Activated CD8-positive, alpha-beta T cell treated with anti-CD3 and anti-CD28 coated beads, Interleukin-2, amount 10 ng/mL, durations not matched to agents 7 days and 5 days (primary cell): ENCODE measurements at regions of chr3 and their contacts with region 1.

Region 1: DNA sequence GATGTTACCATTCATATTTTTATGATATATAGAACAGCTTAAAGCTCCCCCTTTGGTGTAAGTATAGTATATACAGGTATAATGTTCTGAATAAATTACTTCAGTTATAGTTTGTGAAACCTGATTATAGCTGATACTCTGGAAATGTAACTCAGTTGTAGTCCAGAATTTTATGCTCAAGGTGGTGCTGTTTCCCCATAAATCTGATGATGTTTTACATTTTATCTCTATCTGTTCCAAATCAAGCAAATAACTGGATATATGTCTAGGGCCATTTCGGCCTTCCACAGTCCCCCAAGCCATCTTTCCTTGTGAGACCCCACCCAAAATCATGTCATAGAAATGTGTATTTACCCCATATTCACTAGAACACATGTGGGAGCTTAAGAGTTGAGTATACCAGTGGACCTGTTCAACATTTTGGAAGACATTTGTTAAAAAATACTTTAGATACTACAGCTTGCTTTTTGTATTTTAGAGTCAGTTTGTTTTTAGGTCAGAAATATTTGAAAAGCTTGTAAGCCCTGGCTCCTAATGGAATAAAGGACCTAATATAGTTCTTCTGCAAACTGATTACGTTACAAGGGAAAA is 107.1 kb downstream of the ATG7 start:
- DNase-seq: peak; percentile 30
- ATAC-seq: no peak
- H3K4me3 Mint-ChIP-seq: no peak overlapping the region
- H3K27ac Mint-ChIP-seq: no peak overlapping the region
- H3K4me1 Mint-ChIP-seq: no peaks in the 10 kb centered on the region
- H3K27me3 Mint-ChIP-seq: no peaks in the 10 kb centered on the region

Region 2: DNA sequence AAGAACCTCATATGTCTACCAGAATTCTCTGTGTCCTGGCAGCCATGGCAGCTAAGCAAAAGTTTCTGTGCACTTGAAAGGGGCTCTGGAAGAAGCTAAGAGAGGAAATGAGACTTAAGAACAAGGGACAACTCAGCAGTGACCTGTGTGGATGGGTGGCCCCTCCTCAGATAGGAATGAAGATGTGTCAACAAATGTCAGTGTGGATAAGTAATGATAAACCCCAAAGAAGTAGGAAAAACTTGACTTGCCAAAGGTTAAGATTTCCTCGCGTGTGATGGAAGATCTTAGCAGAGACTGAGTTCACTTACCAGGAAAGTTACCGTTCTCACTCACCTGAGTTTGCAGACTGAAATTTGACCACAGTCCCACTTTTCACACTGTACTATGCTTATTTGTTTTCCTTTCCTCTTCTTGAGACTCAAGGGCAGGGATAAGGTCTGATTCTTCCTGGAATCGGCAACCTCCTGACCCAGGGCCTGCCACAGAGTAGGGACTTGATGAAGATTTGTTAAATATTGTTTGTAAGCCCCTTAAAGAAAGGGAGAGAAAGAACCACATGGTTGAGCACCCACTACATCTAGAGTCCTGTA is 232.5 kb before region 1 on chr3:
- CTCF ChIA-PET with region 1: no interaction called
- POLR2A ChIA-PET with region 1: no interaction called
- DNase-seq: no peak
- ATAC-seq: no peak
- H3K4me3 Mint-ChIP-seq: no peak overlapping the region
- H3K27ac Mint-ChIP-seq: no peak overlapping the region
- H3K4me1 Mint-ChIP-seq: peaks cover under 1% of the 10 kb centered on the region
- H3K27me3 Mint-ChIP-seq: peaks cover 45% of the 10 kb centered on the region

Region 3: DNA sequence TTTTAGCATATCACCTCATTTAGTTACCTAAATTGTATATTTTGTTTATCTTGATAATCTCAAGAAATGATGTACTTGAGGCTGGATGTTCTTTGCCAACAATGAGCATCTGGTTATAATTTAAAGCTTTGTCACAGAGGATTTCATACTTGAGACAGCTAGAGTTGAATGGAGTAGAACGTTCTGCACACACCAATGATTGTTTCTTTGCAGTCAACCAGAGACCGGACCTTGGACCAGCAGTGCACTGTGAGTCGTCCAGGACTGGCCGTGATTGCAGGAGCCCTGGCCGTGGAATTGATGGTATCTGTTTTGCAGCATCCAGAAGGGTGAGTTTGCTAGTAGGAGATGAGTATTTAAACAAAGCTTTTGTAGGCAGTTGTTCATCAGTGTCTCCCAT is 16.7 kb before region 1 on chr3:
- CTCF ChIA-PET with region 1: interaction called, 12 read pairs
- POLR2A ChIA-PET with region 1: no interaction called
- DNase-seq: no peak
- ATAC-seq: no peak
- H3K4me3 Mint-ChIP-seq: no peak overlapping the region
- H3K27ac Mint-ChIP-seq: no peak overlapping the region
- H3K4me1 Mint-ChIP-seq: no peaks in the 10 kb centered on the region
- H3K27me3 Mint-ChIP-seq: no peaks in the 10 kb centered on the region

Region 4: DNA sequence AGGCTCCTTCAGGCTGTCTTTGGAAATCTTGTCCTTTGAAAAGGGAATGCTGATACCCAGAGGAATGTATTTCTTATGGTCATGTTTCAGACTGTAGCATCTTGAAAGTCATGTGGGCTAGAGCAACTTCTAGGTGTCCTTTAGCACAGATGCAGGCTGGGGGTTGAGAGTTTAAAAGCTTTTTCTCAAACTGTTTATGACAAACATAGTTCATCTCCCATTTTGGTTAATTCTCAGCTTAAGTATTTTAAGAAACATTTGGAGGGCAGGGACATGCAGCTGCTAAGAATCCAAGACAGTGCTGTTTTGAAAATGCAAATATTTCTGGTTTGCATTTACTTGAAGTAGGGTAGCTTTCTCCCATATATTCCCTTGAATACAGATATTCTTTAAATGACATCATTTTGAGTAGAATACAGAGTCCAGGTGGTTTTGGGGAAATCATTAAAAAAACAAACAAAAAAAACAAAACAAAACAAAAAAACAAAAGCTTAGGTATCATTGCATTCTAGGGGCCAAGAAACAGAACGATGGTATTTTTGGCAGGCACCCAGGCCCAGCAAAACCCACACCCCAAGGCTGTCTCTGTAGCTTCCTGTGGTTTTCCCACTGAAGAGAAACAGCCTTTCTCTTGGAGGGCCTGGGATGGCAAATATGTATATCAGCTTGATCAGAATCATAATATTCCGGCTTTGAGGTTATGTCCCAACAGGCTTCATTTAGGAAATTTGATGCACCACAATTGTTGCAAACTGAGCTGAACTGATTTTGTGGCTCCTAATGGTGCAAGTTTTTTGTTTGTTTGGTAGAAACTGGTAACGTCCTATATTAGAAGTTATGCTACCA is 12.9 kb after region 1 on chr3:
- CTCF ChIA-PET with region 1: interaction called, 13 read pairs
- POLR2A ChIA-PET with region 1: no interaction called
- DNase-seq: no peak
- ATAC-seq: no peak
- H3K4me3 Mint-ChIP-seq: no peak overlapping the region
- H3K27ac Mint-ChIP-seq: no peak overlapping the region
- H3K4me1 Mint-ChIP-seq: peaks cover 13% of the 10 kb centered on the region
- H3K27me3 Mint-ChIP-seq: no peaks in the 10 kb centered on the region

Region 5: GRCh38 chr3:11452312-11452711 is 73.0 kb after region 1 on chr3:
- CTCF ChIA-PET with region 1: no interaction called
- POLR2A ChIA-PET with region 1: no interaction called
- DNase-seq: no peak
- ATAC-seq: no peak
- H3K4me3 Mint-ChIP-seq: no peak overlapping the region
- H3K27ac Mint-ChIP-seq: no peak overlapping the region
- H3K4me1 Mint-ChIP-seq: no peaks in the 10 kb centered on the region
- H3K27me3 Mint-ChIP-seq: no peaks in the 10 kb centered on the region

Region 6: DNA sequence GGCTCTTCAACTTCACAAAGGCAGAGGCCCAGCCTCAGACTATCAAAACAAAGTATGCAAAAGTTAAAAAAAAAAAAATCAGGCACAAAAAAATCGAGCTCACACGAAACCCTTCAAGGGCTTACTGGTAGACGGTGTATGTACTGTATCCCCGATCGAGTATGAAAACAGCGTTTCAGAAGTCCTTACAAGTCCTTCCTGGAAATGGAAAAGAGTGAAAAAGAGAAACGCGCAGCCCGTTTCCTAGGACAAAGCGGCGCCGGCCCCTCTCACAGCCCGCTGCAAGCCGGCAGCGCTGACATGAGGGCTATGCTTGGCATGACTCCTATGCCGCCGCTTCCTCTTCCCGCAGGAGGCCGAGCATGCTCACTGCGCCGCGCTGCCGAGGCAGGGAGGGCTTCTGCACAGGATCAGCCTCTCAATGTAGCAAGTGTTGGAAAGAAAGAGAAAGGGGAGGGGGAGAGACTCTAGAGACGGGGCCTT is 264.3 kb after region 1 on chr3 and contains the start of gene VGLL4:
- CTCF ChIA-PET with region 1: interaction called, 76 read pairs
- POLR2A ChIA-PET with region 1: no interaction called
- DNase-seq: peak; percentile 76
- ATAC-seq: peak; percentile 69
- H3K4me3 Mint-ChIP-seq: peak within 1 kb of the TSS; percentile 91
- H3K27ac Mint-ChIP-seq: peak within 1 kb of the TSS; percentile 98
- H3K4me1 Mint-ChIP-seq: peaks cover 37% of the 10 kb centered on the region
- H3K27me3 Mint-ChIP-seq: peaks cover 5% of the 10 kb centered on the region
- total RNA-seq, gene VGLL4: 37.1 TPM

Region 7: GRCh38 chr3:11651900-11652299 is 272.6 kb after region 1 on chr3:
- CTCF ChIA-PET with region 1: interaction called, 76 read pairs
- POLR2A ChIA-PET with region 1: no interaction called
- DNase-seq: no peak
- ATAC-seq: no peak
- H3K4me3 Mint-ChIP-seq: no peak overlapping the region
- H3K27ac Mint-ChIP-seq: no peak overlapping the region
- H3K4me1 Mint-ChIP-seq: peaks cover 12% of the 10 kb centered on the region
- H3K27me3 Mint-ChIP-seq: peaks cover 3% of the 10 kb centered on the region

Region 8: GRCh38 chr3:11735638-11736037 is 356.3 kb after region 1 on chr3:
- CTCF ChIA-PET with region 1: no interaction called
- POLR2A ChIA-PET with region 1: no interaction called
- DNase-seq: no peak
- ATAC-seq: no peak
- H3K4me3 Mint-ChIP-seq: no peak overlapping the region
- H3K27ac Mint-ChIP-seq: no peak overlapping the region
- H3K4me1 Mint-ChIP-seq: no peaks in the 10 kb centered on the region
- H3K27me3 Mint-ChIP-seq: peaks cover 8% of the 10 kb centered on the region

Region 9: GRCh38 chr3:11803977-11804892 is 424.9 kb after region 1 on chr3:
- CTCF ChIA-PET with region 1: interaction called, 19 read pairs
- POLR2A ChIA-PET with region 1: no interaction called
- DNase-seq: peak; percentile 62
- ATAC-seq: peak; percentile 89
- H3K4me3 Mint-ChIP-seq: no peak overlapping the region
- H3K27ac Mint-ChIP-seq: no peak overlapping the region
- H3K4me1 Mint-ChIP-seq: peaks cover 8% of the 10 kb centered on the region
- H3K27me3 Mint-ChIP-seq: no peaks in the 10 kb centered on the region